Naive thymus-derived CD8-positive, alpha-beta T cell (primary cell): ENCODE measurements at regions of chr9 and their contacts with region 1.

Region 1: GRCh38 chr9:137086531-137087408 is at the start of gene MAN1B1:
- DNase-seq: peak; percentile 93 to 100 (median 99)
- ATAC-seq: peak; percentile 86 to 88
- H3K4me3 Mint-ChIP-seq: peak within 1 kb of the TSS; percentile 80 to 97 (median 92)
- H3K27ac Mint-ChIP-seq: peak within 1 kb of the TSS; percentile 89 to 98 (median 96)
- H3K4me1 Mint-ChIP-seq: peaks cover 21 to 41% (median 37%) of the 10 kb centered on the region in 4 donors
- H3K27me3 Mint-ChIP-seq: no peaks in the 10 kb centered on the region
- polyA plus RNA-seq, gene MAN1B1: 30.6 to 46.6 (median 38.3) TPM

Region 2: DNA sequence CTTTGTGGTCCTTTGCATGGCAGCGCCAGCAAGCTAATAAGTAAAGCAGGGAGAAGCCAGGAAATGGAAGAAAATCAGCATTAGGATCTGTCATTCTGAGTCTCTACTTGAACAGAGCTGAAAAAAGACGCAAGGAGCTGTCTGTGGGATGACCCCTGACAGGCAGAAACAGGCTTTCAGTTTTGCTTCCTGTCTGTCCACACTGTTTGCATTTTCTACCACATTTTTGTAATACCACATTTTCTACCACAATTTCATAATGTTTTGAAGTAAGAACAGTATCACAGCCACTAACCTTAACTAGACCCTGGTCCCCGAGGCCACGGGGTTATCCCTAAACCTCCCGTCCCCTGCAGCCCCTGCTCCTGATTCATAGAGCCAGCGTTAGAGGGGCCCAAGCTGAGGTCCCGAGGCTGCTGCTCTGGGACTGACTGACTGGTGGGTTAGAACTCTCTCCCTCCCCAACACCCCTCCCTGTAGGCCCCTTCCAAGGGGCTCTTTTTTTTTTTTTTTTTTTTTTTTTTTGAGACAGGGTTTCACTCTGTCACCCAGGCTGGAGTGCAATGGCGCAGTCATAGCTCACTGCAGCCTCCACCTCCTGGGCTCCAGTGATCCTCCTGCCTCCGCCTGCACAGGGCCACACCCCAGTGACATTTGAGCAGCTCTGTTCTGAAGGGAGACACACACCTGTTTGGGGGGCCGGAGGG is 86.4 kb before region 1 on chr9:
- POLR2A ChIA-PET with region 1: no interaction called
- DNase-seq: peak in 2 of 10 donors; percentile 26 to 53
- ATAC-seq: peak; percentile 9 to 40
- H3K4me3 Mint-ChIP-seq: peak overlapping the region in 9 of 10 donors; percentile 0 to 78 (median 58)
- H3K27ac Mint-ChIP-seq: peak overlapping the region; percentile 38 to 90 (median 76)
- H3K4me1 Mint-ChIP-seq: peaks cover 23 to 43% (median 41%) of the 10 kb centered on the region in 4 donors
- H3K27me3 Mint-ChIP-seq: no peaks in the 10 kb centered on the region

Region 3: GRCh38 chr9:137070201-137070905 is 16.4 kb before region 1 on chr9 and contains the start of gene SAPCD2:
- POLR2A ChIA-PET with region 1: interaction called, 73 read pairs
- DNase-seq: peak; percentile 74 to 91 (median 81)
- ATAC-seq: peak; percentile 90 to 91
- H3K4me3 Mint-ChIP-seq: peak within 1 kb of the TSS; percentile 63 to 87 (median 74)
- H3K27ac Mint-ChIP-seq: peak within 1 kb of the TSS in 6 of 10 donors; percentile 19 to 79 (median 57)
- H3K4me1 Mint-ChIP-seq: peaks cover 11 to 23% (median 14%) of the 10 kb centered on the region in 4 donors
- H3K27me3 Mint-ChIP-seq: peaks cover 0 to 8% (median 4%) of the 10 kb centered on the region in 5 donors
- polyA plus RNA-seq, gene SAPCD2: 0.23 to 0.27 TPM in 2 of 3 donors, not detected in the other

Region 4: DNA sequence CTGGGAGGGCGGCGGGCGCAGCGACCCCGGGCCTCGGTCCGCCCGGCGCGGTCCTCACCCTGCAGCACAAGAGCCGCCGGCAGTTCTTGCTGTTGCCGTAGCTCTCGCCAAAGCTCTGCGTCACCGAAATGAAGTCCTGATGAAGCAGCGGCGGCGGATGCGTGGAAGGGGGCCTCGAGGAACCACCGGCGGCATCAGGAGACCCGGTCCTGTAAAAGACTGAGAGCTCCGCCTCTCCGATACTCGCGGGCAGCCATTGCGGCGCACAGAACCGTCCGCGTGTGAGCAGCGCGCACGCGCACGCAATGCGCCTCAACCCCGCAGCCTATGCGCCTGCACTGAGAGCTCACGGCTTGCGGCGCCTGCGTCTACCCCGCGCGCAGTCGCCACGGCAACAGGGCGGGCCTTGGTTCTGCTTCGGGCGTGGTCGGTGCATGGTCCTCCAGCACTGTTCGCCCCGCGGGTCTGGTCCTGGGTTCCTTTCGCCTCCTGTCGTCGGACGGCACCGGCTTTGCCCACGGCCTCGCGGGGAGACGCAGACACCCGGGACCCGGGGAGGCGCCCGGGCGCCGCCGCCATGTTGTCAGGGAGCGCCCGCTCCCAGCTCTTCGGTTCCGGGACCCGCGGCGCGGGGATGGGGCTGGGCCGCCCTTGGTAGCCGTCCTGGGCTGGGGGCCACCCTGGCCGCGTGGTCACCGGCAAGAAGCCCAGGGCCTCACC is 42.8 kb after region 1 on chr9:
- POLR2A ChIA-PET with region 1: interaction called, 27 read pairs
- DNase-seq: peak; percentile 82 to 93 (median 88)
- ATAC-seq: peak; percentile 92 to 95
- H3K4me3 Mint-ChIP-seq: peak overlapping the region; percentile 78 to 95 (median 88)
- H3K27ac Mint-ChIP-seq: peak overlapping the region; percentile 71 to 94 (median 84)
- H3K4me1 Mint-ChIP-seq: peaks cover 17 to 30% (median 28%) of the 10 kb centered on the region in 4 donors
- H3K27me3 Mint-ChIP-seq: peaks cover 0 to 10% (median 2%) of the 10 kb centered on the region in 5 donors

Region 5: GRCh38 chr9:137200311-137201204 is 113.8 kb after region 1 on chr9 and contains the start of gene TPRN:
- POLR2A ChIA-PET with region 1: interaction called, 10 read pairs
- DNase-seq: peak; percentile 94 to 99 (median 98)
- ATAC-seq: peak; percentile 93 to 95
- H3K4me3 Mint-ChIP-seq: peak within 1 kb of the TSS; percentile 76 to 92 (median 85)
- H3K27ac Mint-ChIP-seq: peak within 1 kb of the TSS; percentile 48 to 90 (median 80)
- H3K4me1 Mint-ChIP-seq: peaks cover 9 to 39% (median 22%) of the 10 kb centered on the region in 4 donors
- H3K27me3 Mint-ChIP-seq: no peaks in the 10 kb centered on the region
- polyA plus RNA-seq, gene TPRN: 0.15 to 0.42 (median 0.39) TPM

Region 6: DNA sequence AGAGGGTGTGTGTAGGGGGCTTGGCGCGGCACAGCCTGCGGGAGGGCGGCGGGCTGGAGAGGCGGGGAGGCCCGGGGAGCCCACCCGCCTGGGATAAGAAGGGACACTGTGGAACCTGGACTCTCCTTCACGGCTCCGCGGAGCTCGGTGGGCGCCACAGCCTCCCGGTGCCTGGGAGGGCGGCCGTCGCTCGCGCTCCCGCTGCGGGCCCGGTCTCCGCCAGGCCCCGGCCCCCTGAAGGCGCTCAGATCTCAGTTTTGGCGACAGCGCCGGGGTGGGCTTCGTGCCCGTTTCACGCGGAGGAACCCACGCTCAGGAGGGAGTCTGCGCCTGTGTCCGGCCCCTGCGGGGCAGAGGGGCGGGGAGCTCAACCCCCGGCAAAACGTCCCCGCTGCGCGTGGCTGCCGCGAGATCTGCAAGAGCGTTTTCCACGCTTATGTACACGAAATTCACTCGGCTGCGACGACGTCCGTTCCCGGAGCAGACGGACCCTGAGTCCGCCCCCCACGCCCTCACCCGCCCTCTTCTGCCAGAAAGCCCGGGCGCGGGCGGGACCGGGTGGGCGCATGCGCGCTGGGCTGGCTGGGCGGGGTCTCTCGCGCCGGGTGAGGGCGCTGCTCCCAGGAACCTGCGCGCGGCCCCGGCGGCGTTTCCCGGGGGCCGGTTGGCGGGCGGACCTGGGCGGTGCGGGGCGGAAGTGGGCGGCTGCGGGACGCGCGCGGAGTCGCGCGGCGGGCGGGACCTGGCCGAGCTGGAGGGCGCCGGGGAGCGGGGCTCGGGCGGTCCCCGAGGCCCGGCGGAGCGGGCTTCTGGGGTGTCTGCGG is 168.1 kb after region 1 on chr9 and contains the start of gene NELFB:
- POLR2A ChIA-PET with region 1: interaction called, 14 read pairs
- DNase-seq: peak; percentile 89 to 99 (median 96)
- ATAC-seq: peak; percentile 90
- H3K4me3 Mint-ChIP-seq: peak within 1 kb of the TSS; percentile 84 to 96 (median 87)
- H3K27ac Mint-ChIP-seq: peak within 1 kb of the TSS; percentile 41 to 89 (median 78)
- H3K4me1 Mint-ChIP-seq: peaks cover 4 to 20% (median 12%) of the 10 kb centered on the region in 4 donors
- H3K27me3 Mint-ChIP-seq: no peaks in the 10 kb centered on the region
- polyA plus RNA-seq, gene NELFB: 20.4 to 29.7 (median 25.0) TPM